Natural killer cell (primary cell): ENCODE measurements at regions of chr2 and their contacts with region 1.

Region 1: GRCh38 chr2:30225131-30225762 is 6.1 kb upstream of the LBH start:
- DNase-seq: peak; percentile 42 to 83
- ATAC-seq: peak; percentile 59 to 76 (median 61)
- H3K4me3 ChIP-seq: peak overlapping the region; percentile 49
- H3K4me3 Mint-ChIP-seq: peak overlapping the region; percentile 96
- H3K27ac ChIP-seq: peak overlapping the region; percentile 97
- H3K27ac Mint-ChIP-seq: peak overlapping the region; percentile 87 to 100
- H3K4me1 ChIP-seq: peaks cover 66% of the 10 kb centered on the region
- H3K4me1 Mint-ChIP-seq: peaks cover 72 to 86% of the 10 kb centered on the region in 2 donors
- H3K27me3 ChIP-seq: no peaks in the 10 kb centered on the region
- H3K27me3 Mint-ChIP-seq: no peaks in the 10 kb centered on the region
- CTCF ChIP-seq: no peak

Region 2: DNA sequence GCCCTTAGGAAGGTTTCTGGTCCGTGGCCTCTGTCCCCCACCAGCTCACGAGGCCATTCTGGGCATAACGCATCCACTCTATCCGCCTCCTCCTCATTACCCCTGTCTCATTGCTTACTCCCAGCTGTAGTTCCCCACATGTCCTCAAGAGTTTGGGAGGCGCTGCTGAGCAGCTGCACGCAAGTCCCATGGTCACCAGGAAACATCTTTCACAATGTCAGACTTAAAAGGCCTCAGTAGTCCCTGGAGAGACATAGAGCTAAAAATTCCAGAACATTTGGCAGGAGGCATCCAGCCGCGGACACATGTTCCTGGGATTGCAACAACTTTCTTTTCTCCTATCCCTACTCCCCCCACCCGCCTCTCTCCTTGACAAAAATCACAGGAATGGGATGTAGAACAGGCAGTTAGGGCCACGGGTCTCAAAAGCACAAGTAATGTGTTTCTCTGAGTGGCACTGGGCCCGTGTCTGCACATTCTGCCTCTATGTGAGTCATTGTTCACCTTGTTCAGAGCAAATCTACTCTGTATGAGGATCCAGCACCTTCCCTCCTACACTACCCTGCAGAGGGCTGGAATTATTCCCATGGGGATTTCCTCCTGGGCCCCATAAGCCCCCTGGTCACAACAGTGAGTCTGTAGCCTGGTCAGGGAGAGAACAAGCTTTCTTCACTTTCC is 14.2 kb after region 1 on chr2:
- intact Hi-C with region 1: loop called (anchors 2 kb)
- DNase-seq: peak; percentile 64 to 93
- ATAC-seq: peak; percentile 74 to 83 (median 81)
- H3K4me3 ChIP-seq: no peak overlapping the region
- H3K4me3 Mint-ChIP-seq: peak overlapping the region; percentile 71
- H3K27ac ChIP-seq: no peak overlapping the region
- H3K27ac Mint-ChIP-seq: peak overlapping the region; percentile 85 to 93
- H3K4me1 ChIP-seq: peaks cover 75% of the 10 kb centered on the region
- H3K4me1 Mint-ChIP-seq: peaks cover 80 to 89% of the 10 kb centered on the region in 2 donors
- H3K27me3 ChIP-seq: no peaks in the 10 kb centered on the region
- H3K27me3 Mint-ChIP-seq: no peaks in the 10 kb centered on the region
- CTCF ChIP-seq: peak; percentile 73

Region 3: DNA sequence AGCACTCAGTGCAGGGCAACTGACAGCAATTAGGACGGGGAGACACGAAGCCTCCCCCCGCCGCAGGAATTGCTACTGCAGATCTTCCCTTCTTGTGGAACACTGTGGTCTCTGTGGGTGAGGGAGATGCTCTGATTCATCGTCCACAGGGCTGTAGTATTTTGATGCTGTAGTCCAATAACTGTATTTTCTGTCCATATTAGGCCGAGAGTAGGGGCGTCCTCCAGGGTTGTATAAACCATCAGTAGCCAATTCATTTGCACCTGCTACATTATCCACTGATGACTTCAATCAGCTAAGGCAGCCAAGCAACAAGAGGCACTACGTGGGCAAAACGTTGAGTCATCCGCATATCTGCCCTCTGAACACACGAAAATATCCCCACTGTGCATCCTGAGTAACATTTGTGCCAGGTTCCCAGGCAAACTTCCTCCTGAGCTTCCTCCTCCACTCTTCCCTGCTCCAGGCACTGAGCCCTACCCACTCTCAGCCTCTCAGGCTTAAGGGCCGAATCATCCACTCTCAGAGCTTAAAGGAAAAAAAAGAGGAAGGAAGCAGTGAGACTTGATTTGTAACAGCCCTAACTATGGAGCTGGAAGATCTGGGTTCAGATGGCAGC is 68.2 kb after region 1 on chr2:
- intact Hi-C with region 1: loop called (anchors 5 kb)
- DNase-seq: no peak
- ATAC-seq: peak; percentile 42 to 78 (median 43)
- H3K4me3 ChIP-seq: no peak overlapping the region
- H3K4me3 Mint-ChIP-seq: peak overlapping the region; percentile 64
- H3K27ac ChIP-seq: peak overlapping the region; percentile 64
- H3K27ac Mint-ChIP-seq: peak overlapping the region; percentile 92
- H3K4me1 ChIP-seq: peaks cover 24% of the 10 kb centered on the region
- H3K4me1 Mint-ChIP-seq: peaks cover 30 to 42% of the 10 kb centered on the region in 2 donors
- H3K27me3 ChIP-seq: no peaks in the 10 kb centered on the region
- H3K27me3 Mint-ChIP-seq: no peaks in the 10 kb centered on the region
- CTCF ChIP-seq: no peak